Naive thymus-derived CD8-positive, alpha-beta T cell (primary cell): ENCODE measurements at regions of chr7 and their contacts with region 1.

Region 1: GRCh38 chr7:30148951-30149471 is 14.2 kb downstream of the MTURN start:
- DNase-seq: peak; percentile 19 to 83 (median 51)
- ATAC-seq: peak; percentile 90 to 92
- H3K4me3 Mint-ChIP-seq: peak overlapping the region in 3 of 10 donors; percentile 65 to 84 (median 74)
- H3K27ac Mint-ChIP-seq: peak overlapping the region in 2 of 10 donors; percentile 84 to 90
- H3K4me1 Mint-ChIP-seq: peaks cover 0 to 6% (median 2%) of the 10 kb centered on the region in 4 donors
- H3K27me3 Mint-ChIP-seq: no peaks in the 10 kb centered on the region

Region 2: DNA sequence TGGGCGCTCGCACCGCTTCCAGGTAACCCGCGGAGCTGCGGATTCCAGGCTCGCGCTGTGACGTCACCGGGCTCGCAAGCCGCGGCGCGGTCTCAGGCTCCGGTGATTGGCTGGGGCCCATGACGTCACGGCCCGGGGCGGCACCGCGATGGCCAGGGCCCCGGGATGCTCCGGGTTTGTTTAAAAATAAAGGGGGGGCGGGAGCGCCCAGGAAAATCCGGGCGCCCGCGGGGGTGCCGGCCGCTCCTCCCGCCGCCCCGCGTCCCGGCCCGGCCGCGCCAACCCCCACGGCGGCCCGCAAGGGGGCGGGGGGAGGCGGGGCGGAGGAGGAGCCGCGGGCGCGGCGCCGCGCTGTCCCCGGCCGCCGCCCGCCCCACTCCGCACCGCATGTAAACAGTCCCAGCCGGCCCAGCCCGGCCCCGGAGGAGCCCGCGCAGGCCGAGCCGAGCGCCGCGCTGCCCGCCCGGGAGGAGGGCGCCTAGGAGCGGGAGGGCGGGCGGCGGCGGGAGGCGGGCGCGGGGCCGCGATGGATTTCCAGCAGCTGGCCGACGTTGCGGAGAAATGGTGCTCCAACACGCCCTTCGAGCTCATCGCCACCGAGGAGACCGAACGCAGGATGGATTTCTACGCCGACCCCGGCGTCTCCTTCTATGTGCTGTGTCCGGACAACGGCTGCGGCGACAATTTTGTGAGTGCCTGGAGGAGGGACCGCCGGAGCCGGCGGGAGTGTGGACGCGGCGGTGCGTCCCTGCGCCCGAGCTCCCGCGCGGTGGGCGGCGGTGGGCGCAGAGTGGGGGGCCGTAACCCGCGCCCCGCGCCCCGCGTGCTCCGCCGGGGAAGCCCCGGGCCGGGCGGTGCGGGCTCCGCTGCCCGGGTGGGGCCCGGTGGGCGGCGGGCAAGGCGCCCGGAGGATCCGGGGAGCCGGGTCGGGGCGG is 14.1 kb before region 1 on chr7 and contains the start of gene MTURN:
- POLR2A ChIA-PET with region 1: interaction called, 12 read pairs
- DNase-seq: peak; percentile 73 to 91 (median 87)
- ATAC-seq: peak; percentile 81 to 84
- H3K4me3 Mint-ChIP-seq: peak within 1 kb of the TSS; percentile 84 to 95 (median 90)
- H3K27ac Mint-ChIP-seq: peak within 1 kb of the TSS; percentile 44 to 95 (median 92)
- H3K4me1 Mint-ChIP-seq: peaks cover 8 to 11% (median 9%) of the 10 kb centered on the region in 4 donors
- H3K27me3 Mint-ChIP-seq: peaks cover 0 to 5% (median 3%) of the 10 kb centered on the region in 5 donors
- polyA plus RNA-seq, gene MTURN: 1.4 to 5.2 (median 3.3) TPM